ENCODE measurements at regions of chr19 and their contacts with region 1.

Region 1: DNA sequence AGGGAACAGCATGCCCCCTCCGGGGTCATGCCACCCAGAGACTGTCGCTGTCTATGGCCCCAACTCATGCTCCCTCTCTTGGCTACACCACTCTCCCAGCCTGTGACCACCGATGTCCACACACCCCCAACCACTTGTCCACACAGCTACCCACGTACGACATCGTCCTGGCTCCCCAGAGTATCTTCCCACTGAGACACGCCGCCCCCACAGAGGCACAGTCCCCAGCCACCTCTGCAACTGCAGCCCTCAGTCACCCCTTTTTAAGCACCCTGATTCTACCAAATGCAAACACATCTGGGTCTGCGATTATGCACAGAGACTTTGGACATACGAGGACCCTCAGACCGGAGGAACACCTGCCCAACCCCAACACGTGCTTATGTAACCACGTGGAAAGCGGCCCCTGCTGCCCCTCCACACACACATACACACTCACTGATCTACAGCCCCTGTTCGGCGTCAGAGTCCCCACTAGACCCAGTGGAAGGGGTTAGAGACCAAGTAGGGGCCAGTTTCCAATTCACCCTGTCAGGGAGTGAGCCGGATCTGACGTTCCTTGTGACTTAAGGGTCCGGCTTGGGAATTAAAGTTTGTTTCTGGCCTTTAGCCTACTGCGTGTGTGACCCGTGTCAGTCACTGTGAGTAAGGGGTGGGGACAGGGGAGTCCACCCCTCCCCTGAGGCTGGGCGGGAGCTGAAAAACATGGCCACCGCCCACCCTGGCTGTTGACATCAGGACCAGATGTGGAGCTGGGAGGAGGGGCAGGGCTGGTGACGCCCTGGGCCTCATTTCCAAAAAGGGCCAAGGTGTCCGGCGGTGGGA is 11.9 kb upstream of the AXL start:
- DNase-seq: peak; percentile 94 to 97 (median 94)
- ATAC-seq: peak; percentile 89 to 92
- H3K4me3 ChIP-seq: no peak overlapping the region
- H3K27ac ChIP-seq: peak overlapping the region; percentile 37
- H3K4me1 ChIP-seq: no peaks in the 10 kb centered on the region
- H3K27me3 ChIP-seq: no peaks in the 10 kb centered on the region

Region 2: GRCh38 chr19:40982594-40983101 is 224.5 kb before region 1 on chr19:
- intact Hi-C with region 1: no loop called
- DNase-seq: no peak
- ATAC-seq: no peak
- H3K4me3 ChIP-seq: no peak overlapping the region
- H3K27ac ChIP-seq: no peak overlapping the region
- H3K4me1 ChIP-seq: no peaks in the 10 kb centered on the region
- H3K27me3 ChIP-seq: peaks cover 3% of the 10 kb centered on the region

Region 3: DNA sequence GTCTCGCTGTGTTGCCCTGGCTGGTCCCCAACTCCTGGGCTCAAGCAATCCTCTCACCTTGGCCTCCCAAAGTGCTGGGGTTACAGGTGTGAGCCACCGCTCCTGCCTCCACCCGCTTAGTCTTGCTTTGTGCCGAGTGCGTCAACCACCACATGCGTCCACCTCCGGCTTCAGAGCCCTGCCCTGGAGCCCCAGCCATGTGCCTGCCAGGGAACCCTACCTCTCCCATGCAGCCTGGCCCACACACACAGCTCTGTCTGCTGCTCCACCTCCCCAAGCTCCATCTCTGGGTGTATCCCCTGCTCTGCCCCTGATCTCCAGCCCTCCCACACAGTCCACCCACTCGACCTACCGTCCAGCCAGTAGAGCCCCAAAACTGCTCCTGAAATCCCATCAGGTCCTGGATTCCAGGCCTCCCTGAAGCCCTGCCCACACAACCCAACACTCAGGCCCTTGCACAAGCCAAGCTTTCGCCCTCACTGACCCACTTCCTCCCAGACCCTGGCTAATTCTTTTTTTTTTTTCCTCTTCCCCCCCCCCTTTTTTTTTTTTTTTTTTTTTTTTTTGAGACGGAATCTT is 83.3 kb before region 1 on chr19:
- intact Hi-C with region 1: no loop called
- DNase-seq: no peak
- ATAC-seq: no peak
- H3K4me3 ChIP-seq: no peak overlapping the region
- H3K27ac ChIP-seq: no peak overlapping the region
- H3K4me1 ChIP-seq: no peaks in the 10 kb centered on the region
- H3K27me3 ChIP-seq: no peaks in the 10 kb centered on the region

Region 4: GRCh38 chr19:41161903-41162302 is 45.2 kb before region 1 on chr19:
- intact Hi-C with region 1: no loop called
- DNase-seq: no peak
- ATAC-seq: no peak
- H3K4me3 ChIP-seq: no peak overlapping the region
- H3K27ac ChIP-seq: no peak overlapping the region
- H3K4me1 ChIP-seq: no peaks in the 10 kb centered on the region
- H3K27me3 ChIP-seq: no peaks in the 10 kb centered on the region

Region 5: GRCh38 chr19:41255171-41255570 is 48.0 kb after region 1 on chr19:
- intact Hi-C with region 1: loop called in 3 of 4 experiments (anchors 2 to 5 kb)
- DNase-seq: no peak
- ATAC-seq: no peak
- H3K4me3 ChIP-seq: no peak overlapping the region
- H3K27ac ChIP-seq: no peak overlapping the region
- H3K4me1 ChIP-seq: no peaks in the 10 kb centered on the region
- H3K27me3 ChIP-seq: no peaks in the 10 kb centered on the region

Region 6: GRCh38 chr19:41294393-41294792 is 87.3 kb after region 1 on chr19:
- intact Hi-C with region 1: no loop called
- DNase-seq: no peak
- ATAC-seq: no peak
- H3K4me3 ChIP-seq: no peak overlapping the region
- H3K27ac ChIP-seq: no peak overlapping the region
- H3K4me1 ChIP-seq: peaks cover 29% of the 10 kb centered on the region
- H3K27me3 ChIP-seq: no peaks in the 10 kb centered on the region

Region 7: GRCh38 chr19:41308392-41309179 is 101.4 kb after region 1 on chr19:
- intact Hi-C with region 1: loop called (anchors 5 kb)
- DNase-seq: peak; percentile 91 to 97 (median 96)
- ATAC-seq: peak; percentile 61 to 74
- H3K4me3 ChIP-seq: no peak overlapping the region
- H3K27ac ChIP-seq: peak overlapping the region; percentile 90
- H3K4me1 ChIP-seq: peaks cover 8% of the 10 kb centered on the region
- H3K27me3 ChIP-seq: no peaks in the 10 kb centered on the region

Region 8: GRCh38 chr19:41321600-41322270 is 114.6 kb after region 1 on chr19:
- intact Hi-C with region 1: loop called in 1 of 4 experiments (anchors 5 kb)
- DNase-seq: peak; percentile 60 to 77 (median 76)
- ATAC-seq: peak; percentile 3 to 13
- H3K4me3 ChIP-seq: no peak overlapping the region
- H3K27ac ChIP-seq: peak overlapping the region; percentile 80
- H3K4me1 ChIP-seq: peaks cover 12% of the 10 kb centered on the region
- H3K27me3 ChIP-seq: no peaks in the 10 kb centered on the region